ENCODE measurements at regions of chr3 and their contacts with region 1.

Region 1: GRCh38 chr3:187919048-187919447 is 173.8 kb upstream of the BCL6 start:
- DNase-seq: no peak
- ATAC-seq: peak in 1 of 4 donors; percentile 19
- H3K4me3 ChIP-seq: peak overlapping the region in 1 of 12 donors; percentile 15
- H3K27ac ChIP-seq: peak overlapping the region in 1 of 12 donors; percentile 73
- H3K4me1 ChIP-seq: peaks cover 0 to 49% (median 0%) of the 10 kb centered on the region in 12 donors
- H3K27me3 ChIP-seq: no peaks in the 10 kb centered on the region
- CTCF ChIP-seq: no peak
- POLR2A ChIP-seq: no peak

Region 2: DNA sequence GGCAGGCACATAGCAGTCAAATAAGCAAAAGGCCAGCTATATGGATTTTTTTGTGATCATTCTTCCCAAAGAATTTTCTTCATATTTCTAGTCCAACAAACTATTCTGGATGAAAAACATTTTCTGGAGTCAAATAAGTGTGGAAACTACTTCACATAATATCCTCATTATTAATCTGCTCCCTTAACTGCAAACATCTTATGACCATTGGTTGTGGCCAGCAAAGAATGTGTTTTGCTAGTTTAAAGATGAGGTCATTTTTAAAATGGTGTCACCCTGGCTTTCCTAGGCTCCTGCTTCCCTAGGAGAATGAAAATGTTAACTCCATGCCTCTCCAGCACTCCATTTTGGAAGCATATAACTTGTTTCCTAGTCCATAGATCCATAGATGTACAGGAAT is 367.6 kb before region 1 on chr3:
- intact Hi-C with region 1: no loop called
- DNase-seq: no peak
- ATAC-seq: no peak
- H3K4me3 ChIP-seq: no peak overlapping the region
- H3K27ac ChIP-seq: no peak overlapping the region
- H3K4me1 ChIP-seq: no peaks in the 10 kb centered on the region
- H3K27me3 ChIP-seq: no peaks in the 10 kb centered on the region
- CTCF ChIP-seq: no peak
- POLR2A ChIP-seq: no peak

Region 3: GRCh38 chr3:187767266-187768012 is 151.6 kb before region 1 on chr3:
- intact Hi-C with region 1: loop called in 1 of 10 experiments (anchors 5 kb)
- DNase-seq: no peak
- ATAC-seq: no peak
- H3K4me3 ChIP-seq: no peak overlapping the region
- H3K27ac ChIP-seq: no peak overlapping the region
- H3K4me1 ChIP-seq: peaks cover 0 to 22% (median 5%) of the 10 kb centered on the region in 12 donors
- H3K27me3 ChIP-seq: no peaks in the 10 kb centered on the region
- CTCF ChIP-seq: no peak
- POLR2A ChIP-seq: no peak

Region 4: GRCh38 chr3:187783098-187783497 is 135.9 kb before region 1 on chr3:
- intact Hi-C with region 1: loop called in 1 of 10 experiments (anchors 10 kb)
- DNase-seq: peak in 4 of 5 donors; percentile 41 to 59 (median 54)
- ATAC-seq: peak; percentile 80 to 98 (median 97)
- H3K4me3 ChIP-seq: no peak overlapping the region
- H3K27ac ChIP-seq: peak overlapping the region in 9 of 12 donors; percentile 23 to 67 (median 57)
- H3K4me1 ChIP-seq: peaks cover 0 to 13% (median 0%) of the 10 kb centered on the region in 12 donors
- H3K27me3 ChIP-seq: no peaks in the 10 kb centered on the region
- CTCF ChIP-seq: no peak
- POLR2A ChIP-seq: no peak